Astrocyte of the cerebellum (primary cell): ENCODE measurements at regions of chr5 and their contacts with region 1.

Region 1: GRCh38 chr5:78747705-78748359 is 99.3 kb upstream of the LHFPL2 start:
- DNase-seq: peak; percentile 82
- H3K4me3 ChIP-seq: no peak overlapping the region
- CTCF ChIP-seq: no peak

Region 2: DNA sequence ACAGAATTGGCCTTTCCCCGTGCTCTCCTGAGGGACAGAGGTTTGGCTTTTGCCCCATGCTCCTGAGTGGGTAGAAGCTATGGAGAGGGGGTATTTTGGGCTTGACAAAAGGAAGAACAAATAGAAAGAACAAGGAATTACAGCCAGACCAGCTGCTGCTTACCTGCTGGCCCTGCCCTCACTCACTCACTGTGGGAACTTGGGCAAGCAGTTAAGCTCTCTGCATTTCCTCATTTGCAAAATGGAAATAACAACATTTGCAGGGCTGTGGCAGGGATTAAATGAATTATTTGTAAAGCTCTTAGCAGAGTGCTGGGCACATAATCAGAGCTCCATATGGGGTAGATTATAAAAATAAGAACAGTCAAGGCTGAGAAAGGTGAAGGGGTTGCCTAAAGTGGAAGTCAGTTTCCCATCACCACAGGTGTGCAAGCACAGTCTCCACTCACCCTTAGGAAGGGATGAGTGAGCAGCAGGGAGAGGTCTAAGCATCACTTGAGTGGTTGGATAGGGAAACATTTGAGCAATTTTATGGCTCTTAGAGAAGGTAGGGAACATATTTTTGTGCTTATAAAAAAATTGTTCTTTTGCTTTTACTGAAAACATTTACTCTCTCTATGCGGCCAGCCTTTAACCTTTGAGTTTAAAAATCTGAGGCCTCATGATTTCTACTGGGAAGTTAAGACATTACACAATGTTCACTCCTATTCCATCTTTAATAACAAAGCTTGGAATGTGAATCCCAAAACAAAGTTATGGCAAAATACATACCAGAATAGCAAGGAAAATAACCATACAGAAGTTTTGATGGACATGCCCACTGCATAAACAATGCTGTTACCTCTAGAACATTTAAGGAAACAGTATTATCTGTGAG is 56.5 kb before region 1 on chr5:
- in situ Hi-C with region 1: no loop called
- DNase-seq: no peak
- H3K4me3 ChIP-seq: no peak overlapping the region
- CTCF ChIP-seq: no peak

Region 3: GRCh38 chr5:78799266-78800017 is 51.6 kb after region 1 on chr5:
- in situ Hi-C with region 1: loop called (anchors 5 kb)
- DNase-seq: no peak
- H3K4me3 ChIP-seq: no peak overlapping the region
- CTCF ChIP-seq: peak; percentile 19

Region 4: DNA sequence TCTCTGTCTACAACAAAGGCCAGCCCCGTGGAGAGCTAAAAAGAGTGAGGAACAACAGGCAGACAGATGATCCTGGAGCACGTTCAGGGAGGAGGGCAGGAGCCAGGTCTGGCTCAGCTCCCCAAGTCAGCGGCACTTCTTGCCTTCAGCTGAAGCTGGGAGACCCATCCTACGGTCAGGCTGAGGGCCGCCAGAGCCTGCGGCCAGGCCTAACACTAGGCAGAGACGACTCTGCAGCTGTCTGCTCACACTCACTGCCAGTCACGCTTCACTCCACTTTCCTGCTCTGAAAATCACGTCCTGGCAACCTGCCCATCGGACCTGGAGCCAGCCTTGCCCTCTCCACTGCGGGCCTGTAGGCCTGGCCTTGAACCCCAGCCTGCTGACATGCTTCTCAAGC is 61.6 kb after region 1 on chr5:
- in situ Hi-C with region 1: no loop called
- DNase-seq: no peak
- H3K4me3 ChIP-seq: no peak overlapping the region
- CTCF ChIP-seq: no peak

Region 5: GRCh38 chr5:79069488-79070349 is 321.9 kb after region 1 on chr5 and contains the starts of genes BHMT2 and DMGDH:
- in situ Hi-C with region 1: no loop called
- DNase-seq: no peak
- H3K4me3 ChIP-seq: peak within 1 kb of the TSS; percentile 20
- CTCF ChIP-seq: no peak